ENCODE measurements at regions of chr11 and their contacts with region 1.

Region 1: DNA sequence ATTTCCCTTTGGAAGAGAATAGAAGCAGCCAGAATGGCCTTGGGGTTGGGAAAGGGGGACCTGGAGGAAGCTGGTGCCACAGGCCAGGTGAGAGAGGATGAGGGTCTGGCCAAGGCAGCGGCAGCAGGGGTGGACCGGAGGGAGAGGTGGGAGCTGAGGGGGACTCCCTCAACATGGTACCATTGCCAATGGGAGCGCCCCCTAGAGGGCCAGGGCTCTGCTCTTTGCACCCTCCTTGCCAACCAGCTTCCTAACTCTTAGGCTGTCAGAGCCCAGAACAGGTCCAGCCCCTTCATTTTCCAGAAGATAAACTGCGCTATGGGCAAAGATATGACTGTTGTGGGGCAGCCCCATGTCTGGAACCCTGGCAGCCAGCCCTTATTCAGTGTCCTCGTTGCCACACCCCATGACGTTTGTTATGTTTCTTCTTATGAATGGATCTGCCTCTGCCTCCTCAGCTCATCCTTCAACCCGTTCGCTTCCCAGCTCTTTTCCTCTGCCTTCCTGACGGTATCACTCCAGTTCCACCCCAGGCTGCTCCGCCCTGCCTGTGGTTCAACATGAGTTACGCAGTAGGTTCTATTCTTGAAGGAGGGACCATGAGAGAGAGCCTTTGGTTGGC is 185.2 kb downstream of the GRIK4 start:
- DNase-seq: peak in 1 of 2 experiments; percentile 83
- H3K4me3 ChIP-seq: no peak overlapping the region
- H3K27ac ChIP-seq: no peak overlapping the region
- H3K4me1 ChIP-seq: peaks cover 0 to 7% (median 2%) of the 10 kb centered on the region in 4 experiments; a peak in 2 of 7 replicates
- H3K27me3 ChIP-seq: no peaks in the 10 kb centered on the region
- CTCF ChIP-seq: peak; percentile 60 to 77 (median 74)
- EP300 ChIP-seq: no peak
- POLR2A ChIP-seq: no peak
- RAD21 ChIP-seq: peak; percentile 24 to 45; a peak in 3 of 4 replicates

Region 2: DNA sequence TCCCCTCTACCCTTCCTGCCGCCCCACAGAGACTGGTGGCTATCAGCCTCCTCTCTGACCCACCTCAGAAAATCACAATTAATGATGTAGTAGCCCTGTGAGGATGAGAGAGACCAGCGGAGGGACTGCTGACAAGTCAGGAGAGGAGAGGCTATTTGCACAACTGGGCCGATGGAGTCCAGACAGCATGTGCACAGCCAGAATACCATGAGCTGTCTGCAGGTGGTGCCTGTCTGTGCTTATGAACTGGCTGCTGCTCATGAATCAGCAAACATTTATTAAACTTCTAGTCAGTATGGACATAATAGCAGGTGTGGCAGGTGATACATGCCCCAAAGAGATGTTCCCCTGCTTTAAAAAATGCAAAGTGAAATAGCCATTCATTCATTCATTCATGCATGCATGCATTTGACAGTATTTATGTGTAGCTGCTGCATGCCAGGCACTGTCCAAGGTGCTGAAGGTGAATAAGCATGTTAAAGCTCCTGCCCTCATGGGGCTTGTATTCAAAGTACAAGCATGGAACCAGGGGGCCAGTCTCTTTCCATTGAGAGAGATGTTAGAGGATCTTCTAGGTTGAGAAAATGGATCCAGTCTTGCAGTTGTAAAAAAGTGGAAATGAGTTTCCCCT is 43.9 kb before region 1 on chr11:
- CTCF ChIA-PET with region 1: interaction called, 10 read pairs
- POLR2A ChIA-PET with region 1: no interaction called
- DNase-seq: no peak
- H3K4me3 ChIP-seq: no peak overlapping the region
- H3K27ac ChIP-seq: no peak overlapping the region
- H3K4me1 ChIP-seq: no peaks in the 10 kb centered on the region; a peak in 1 of 7 replicates
- H3K27me3 ChIP-seq: peaks cover 15 to 37% (median 24%) of the 10 kb centered on the region in 4 experiments
- CTCF ChIP-seq: no peak
- EP300 ChIP-seq: no peak
- POLR2A ChIP-seq: no peak
- RAD21 ChIP-seq: no peak

Region 3: GRCh38 chr11:120667281-120667680 is 29.4 kb before region 1 on chr11:
- CTCF ChIA-PET with region 1: interaction called, 17 read pairs
- POLR2A ChIA-PET with region 1: no interaction called
- DNase-seq: no peak
- H3K4me3 ChIP-seq: no peak overlapping the region
- H3K27ac ChIP-seq: no peak overlapping the region
- H3K4me1 ChIP-seq: peaks cover 3 to 7% (median 5%) of the 10 kb centered on the region in 4 experiments; a peak in 5 of 7 replicates
- H3K27me3 ChIP-seq: no peaks in the 10 kb centered on the region
- CTCF ChIP-seq: no peak
- EP300 ChIP-seq: no peak
- POLR2A ChIP-seq: no peak
- RAD21 ChIP-seq: no peak

Region 4: GRCh38 chr11:120682866-120683265 is 13.8 kb before region 1 on chr11:
- CTCF ChIA-PET with region 1: interaction called, 140 read pairs
- POLR2A ChIA-PET with region 1: interaction called, 5 read pairs
- DNase-seq: no peak
- H3K4me3 ChIP-seq: no peak overlapping the region
- H3K27ac ChIP-seq: no peak overlapping the region
- H3K4me1 ChIP-seq: peaks cover 0 to 10% (median 5%) of the 10 kb centered on the region in 4 experiments; a peak in 5 of 7 replicates
- H3K27me3 ChIP-seq: no peaks in the 10 kb centered on the region
- CTCF ChIP-seq: no peak
- EP300 ChIP-seq: no peak
- POLR2A ChIP-seq: no peak
- RAD21 ChIP-seq: no peak

Region 5: DNA sequence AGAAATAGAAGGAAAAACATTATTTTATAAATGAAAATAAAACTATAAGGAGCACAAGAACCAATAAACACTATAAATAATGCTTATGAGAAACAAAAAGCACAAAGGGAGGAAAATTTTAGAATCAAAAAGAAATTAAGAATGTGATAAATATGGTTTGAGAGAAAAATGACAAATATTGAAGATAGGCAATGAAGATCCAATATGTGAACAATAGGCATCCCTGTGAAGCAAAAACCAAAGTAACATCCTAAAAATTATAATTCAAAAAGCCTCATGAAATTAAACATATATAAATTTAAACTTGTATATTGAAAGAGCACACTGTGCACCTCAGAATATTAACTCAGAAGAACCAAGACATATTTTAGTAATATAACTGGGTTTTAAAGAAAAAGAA is 31.0 kb after region 1 on chr11:
- CTCF ChIA-PET with region 1: no interaction called
- POLR2A ChIA-PET with region 1: no interaction called
- DNase-seq: no peak
- H3K4me3 ChIP-seq: no peak overlapping the region
- H3K27ac ChIP-seq: no peak overlapping the region
- H3K4me1 ChIP-seq: peaks cover 0 to 5% (median 0%) of the 10 kb centered on the region in 4 experiments; a peak in 1 of 7 replicates
- H3K27me3 ChIP-seq: peaks cover 0 to 2% (median 0%) of the 10 kb centered on the region in 4 experiments; a peak in 1 of 7 replicates
- CTCF ChIP-seq: no peak
- EP300 ChIP-seq: no peak
- POLR2A ChIP-seq: no peak
- RAD21 ChIP-seq: no peak

Region 6: DNA sequence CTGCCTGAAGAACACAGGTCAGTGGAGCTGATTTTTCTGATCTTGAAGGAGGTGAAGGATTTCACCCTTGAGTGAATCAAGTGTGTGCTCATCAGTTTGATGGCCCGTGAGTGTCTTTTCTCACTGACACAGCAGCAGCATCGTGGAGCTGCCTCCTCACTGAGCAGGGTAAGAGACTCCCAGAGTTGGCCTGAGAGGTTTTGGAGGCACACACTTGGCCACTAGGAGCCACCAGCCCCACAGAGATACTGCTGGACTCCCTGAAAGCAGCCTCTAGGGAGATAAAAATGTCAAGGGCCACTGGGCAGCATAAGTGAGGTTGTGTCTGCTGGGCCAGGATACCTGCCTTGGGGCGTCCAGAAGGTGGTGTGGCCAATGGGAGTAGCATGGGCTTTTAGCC is 60.2 kb after region 1 on chr11:
- CTCF ChIA-PET with region 1: interaction called, 11 read pairs
- POLR2A ChIA-PET with region 1: no interaction called
- DNase-seq: no peak
- H3K4me3 ChIP-seq: no peak overlapping the region
- H3K27ac ChIP-seq: no peak overlapping the region
- H3K4me1 ChIP-seq: peaks cover 0 to 5% (median 3%) of the 10 kb centered on the region in 4 experiments; a peak in 3 of 7 replicates
- H3K27me3 ChIP-seq: peaks cover 0 to under 1% (median 0%) of the 10 kb centered on the region in 4 experiments; a peak in 1 of 7 replicates
- CTCF ChIP-seq: peak; percentile 41 to 70 (median 52)
- EP300 ChIP-seq: no peak
- POLR2A ChIP-seq: no peak
- RAD21 ChIP-seq: peak; percentile 58 to 77

Region 7: DNA sequence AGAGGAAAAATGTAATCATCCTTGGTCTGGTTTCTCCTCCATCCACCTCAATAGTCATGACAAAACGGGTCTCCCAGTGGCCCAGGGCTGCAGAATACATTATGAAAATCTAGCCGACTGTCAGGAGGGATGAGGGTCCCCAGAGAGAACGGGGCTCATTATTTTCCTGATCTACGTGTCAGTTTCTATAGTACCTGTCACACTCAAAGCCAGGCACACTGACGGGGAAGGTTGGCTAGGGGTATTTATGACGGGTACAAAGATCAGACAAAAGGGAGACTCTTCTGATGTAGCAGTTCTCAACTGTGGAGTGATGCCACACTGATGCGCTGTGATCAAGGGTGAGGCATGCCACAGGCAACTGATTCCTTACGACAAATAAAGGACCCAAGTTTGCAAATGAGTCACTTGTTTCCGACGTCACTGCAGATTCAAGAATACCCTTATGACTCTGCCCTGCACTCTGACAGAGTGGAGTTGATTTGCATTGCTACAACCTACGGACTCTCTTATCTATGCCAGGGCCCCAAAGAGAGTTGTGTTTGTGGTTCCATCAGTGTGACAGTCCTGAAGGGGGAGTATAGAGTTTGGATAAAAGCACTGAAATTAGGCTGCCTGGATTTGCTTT is 139.0 kb after region 1 on chr11:
- CTCF ChIA-PET with region 1: no interaction called
- POLR2A ChIA-PET with region 1: no interaction called
- DNase-seq: no peak
- H3K4me3 ChIP-seq: no peak overlapping the region
- H3K27ac ChIP-seq: no peak overlapping the region
- H3K4me1 ChIP-seq: no peaks in the 10 kb centered on the region
- H3K27me3 ChIP-seq: no peaks in the 10 kb centered on the region
- CTCF ChIP-seq: no peak
- EP300 ChIP-seq: no peak
- POLR2A ChIP-seq: no peak
- RAD21 ChIP-seq: no peak

Measured in H1 (cell line).